Tibial artery (tissue), 4 donors: ENCODE measurements at regions of chr12 and their contacts with region 1.

Region 1: GRCh38 chr12:50055831-50056638 is 1.4 kb upstream of the ASIC1 start:
- DNase-seq: no peak
- H3K4me3 ChIP-seq: no peak overlapping the region
- H3K27ac ChIP-seq: no peak overlapping the region
- H3K4me1 ChIP-seq: peaks cover 0 to 27% (median 25%) of the 10 kb centered on the region in 4 donors
- H3K27me3 ChIP-seq: peaks cover 0 to 43% of the 10 kb centered on the region in 2 donors
- CTCF ChIP-seq: peak; percentile 83 to 94

Region 2: DNA sequence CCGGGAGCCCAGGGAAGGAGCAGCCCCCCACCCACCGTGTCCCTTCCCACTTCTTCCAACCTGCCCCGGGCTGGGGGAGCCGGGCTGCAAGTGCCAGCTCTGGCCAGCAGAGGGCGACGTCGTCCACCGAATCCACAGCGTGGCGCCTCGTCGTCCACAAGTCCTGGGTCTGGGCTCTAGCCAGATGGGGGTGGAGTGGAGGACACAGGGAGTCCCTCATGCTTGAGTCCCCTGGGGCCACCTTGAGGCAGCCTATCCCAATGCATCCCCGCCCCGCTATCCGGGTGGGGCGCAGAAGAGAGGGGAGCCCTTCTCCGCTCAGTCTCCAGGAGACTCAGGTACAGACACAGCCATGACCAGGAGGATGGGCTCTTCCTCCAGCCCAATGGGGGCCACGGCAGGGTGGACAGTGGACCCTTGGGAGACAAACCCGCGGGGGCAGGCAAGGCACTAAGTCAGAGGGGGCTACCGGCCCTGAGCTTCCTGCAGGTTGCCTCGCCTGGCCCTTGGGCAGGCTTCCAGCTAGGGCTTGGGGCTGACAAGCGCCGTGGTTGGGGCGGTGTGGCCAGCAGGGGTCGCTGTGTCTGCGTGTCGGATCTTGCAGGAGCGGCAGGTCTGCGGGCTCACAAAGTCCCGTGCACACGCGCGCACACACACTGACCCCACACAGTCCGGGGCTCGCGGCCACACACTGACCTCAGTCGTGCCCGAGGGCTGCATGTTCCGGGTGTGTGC is 88.8 kb before region 1 on chr12:
- intact Hi-C with region 1: loop called (anchors 5 kb)
- DNase-seq: peak; percentile 83 to 87
- H3K4me3 ChIP-seq: peak overlapping the region; percentile 11 to 40
- H3K27ac ChIP-seq: no peak overlapping the region
- H3K4me1 ChIP-seq: peaks cover 0 to 22% (median 12%) of the 10 kb centered on the region in 4 donors
- H3K27me3 ChIP-seq: peaks cover 0 to 64% of the 10 kb centered on the region in 2 donors
- CTCF ChIP-seq: peak; percentile 78 to 80

Region 3: GRCh38 chr12:50006789-50007436 is 49.1 kb before region 1 on chr12:
- intact Hi-C with region 1: no loop called
- DNase-seq: no peak
- H3K4me3 ChIP-seq: no peak overlapping the region
- H3K27ac ChIP-seq: no peak overlapping the region
- H3K4me1 ChIP-seq: no peaks in the 10 kb centered on the region
- H3K27me3 ChIP-seq: no peaks in the 10 kb centered on the region
- CTCF ChIP-seq: no peak

Region 4: DNA sequence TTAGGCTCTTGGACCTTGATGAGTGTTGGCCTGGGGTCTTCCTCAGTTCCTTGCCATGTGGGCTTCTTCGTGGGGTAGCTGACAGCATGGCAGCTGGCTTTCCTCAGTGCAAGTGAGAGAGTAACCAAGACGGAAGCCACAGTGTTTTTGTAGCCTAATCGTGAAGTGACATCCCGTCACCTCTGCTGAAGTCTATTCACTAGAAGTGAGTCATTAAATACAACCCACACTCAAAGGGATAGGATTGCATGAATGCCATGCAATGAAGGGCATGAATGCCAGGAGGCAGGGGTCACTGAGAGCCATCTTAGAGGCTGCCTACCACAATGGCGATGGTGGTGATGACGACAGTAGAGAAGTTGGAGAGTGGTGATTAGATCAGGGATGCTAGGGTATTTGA is 12.2 kb before region 1 on chr12:
- intact Hi-C with region 1: no loop called
- DNase-seq: peak in 1 of 2 donors; percentile 31
- H3K4me3 ChIP-seq: no peak overlapping the region
- H3K27ac ChIP-seq: no peak overlapping the region
- H3K4me1 ChIP-seq: no peaks in the 10 kb centered on the region
- H3K27me3 ChIP-seq: peaks cover 0 to 5% of the 10 kb centered on the region in 2 donors
- CTCF ChIP-seq: no peak

Region 5: GRCh38 chr12:50302686-50303085 is 246.7 kb after region 1 on chr12:
- intact Hi-C with region 1: no loop called
- DNase-seq: no peak
- H3K4me3 ChIP-seq: no peak overlapping the region
- H3K27ac ChIP-seq: no peak overlapping the region
- H3K4me1 ChIP-seq: peaks cover 0 to under 1% (median 0%) of the 10 kb centered on the region in 4 donors
- H3K27me3 ChIP-seq: no peaks in the 10 kb centered on the region
- CTCF ChIP-seq: no peak